GM12878 (cell line): ENCODE measurements at regions of chr14 and their contacts with region 1.

Region 1: DNA sequence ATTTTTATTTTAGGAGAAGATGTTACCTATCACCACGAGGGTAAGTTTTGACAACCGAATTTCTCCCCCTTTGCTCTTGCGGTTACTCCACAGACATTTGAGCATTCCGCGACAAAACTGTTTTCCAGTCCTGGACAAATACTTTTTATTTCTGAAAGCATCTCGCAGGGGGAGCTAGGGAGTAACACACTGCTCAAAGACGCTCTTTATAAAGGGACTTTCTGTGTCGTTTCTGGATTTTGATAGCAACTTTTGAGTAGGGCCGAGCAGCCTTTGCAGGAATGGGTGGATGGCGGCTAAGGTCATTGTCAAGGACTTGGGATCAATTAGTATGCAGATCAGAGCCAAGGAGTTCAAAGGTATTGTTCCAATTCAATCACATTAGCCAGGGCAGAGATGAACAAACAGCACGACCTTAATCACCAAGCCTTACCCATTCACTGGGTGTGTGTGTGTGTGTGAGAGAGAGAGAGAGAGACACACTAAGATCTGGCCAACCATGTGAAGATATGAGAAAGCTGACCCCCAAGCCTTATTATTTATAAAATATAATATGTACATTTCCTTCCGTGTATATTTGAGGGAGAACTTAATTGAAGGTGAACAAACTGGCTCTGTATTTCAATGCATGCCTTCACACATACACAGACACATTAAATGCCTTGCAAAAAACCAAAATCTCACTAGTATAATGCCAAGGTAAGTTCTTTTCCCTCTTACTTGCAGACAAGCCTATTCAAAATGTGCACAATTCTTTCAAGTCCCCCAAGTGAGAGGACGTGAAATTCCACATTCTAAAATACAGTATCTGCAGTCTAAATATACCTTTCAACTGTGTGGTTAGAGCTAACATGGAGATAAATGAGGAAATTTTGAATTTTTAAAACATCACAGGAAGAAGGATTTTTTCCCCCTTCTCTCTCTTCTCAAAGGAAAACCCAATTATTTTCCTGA is 613.8 kb downstream of the VRK1 start:
- DNase-seq: no peak
- ATAC-seq: peak; percentile 37; the same call in 2 of the 3 replicates
- H3K4me3 ChIP-seq: no peak overlapping the region
- H3K27ac ChIP-seq: peak overlapping the region; percentile 53
- H3K4me1 ChIP-seq: peaks cover 13% of the 10 kb centered on the region
- H3K27me3 ChIP-seq: no peaks in the 10 kb centered on the region
- CTCF ChIP-seq: peak in 2 of 3 experiments; percentile 2 to 26; a peak in 1 of 6 replicates
- EP300 ChIP-seq: no peak
- POLR2A ChIP-seq: no peak
- RAD21 ChIP-seq: peak; percentile 43; the same call in 1 of the 2 replicates

Region 2: GRCh38 chr14:97185186-97185585 is 225.8 kb before region 1 on chr14:
- CTCF ChIA-PET with region 1: no interaction called
- POLR2A ChIA-PET with region 1: no interaction called
- RAD21 ChIA-PET with region 1: interaction called, 3 read pairs
- SMC1A ChIA-PET with region 1: interaction called, 4 read pairs
- in situ Hi-C with region 1: no loop called
- intact Hi-C with region 1: loop called (anchors 10 kb)
- DNase-seq: no peak
- ATAC-seq: peak; percentile 45; the same call in 2 of the 3 replicates
- H3K4me3 ChIP-seq: no peak overlapping the region
- H3K27ac ChIP-seq: no peak overlapping the region
- H3K4me1 ChIP-seq: no peaks in the 10 kb centered on the region
- H3K27me3 ChIP-seq: no peaks in the 10 kb centered on the region
- CTCF ChIP-seq: peak; percentile 35 to 48 (median 37); a peak in 4 of 6 replicates
- EP300 ChIP-seq: no peak
- POLR2A ChIP-seq: no peak
- RAD21 ChIP-seq: peak; percentile 73

Region 3: DNA sequence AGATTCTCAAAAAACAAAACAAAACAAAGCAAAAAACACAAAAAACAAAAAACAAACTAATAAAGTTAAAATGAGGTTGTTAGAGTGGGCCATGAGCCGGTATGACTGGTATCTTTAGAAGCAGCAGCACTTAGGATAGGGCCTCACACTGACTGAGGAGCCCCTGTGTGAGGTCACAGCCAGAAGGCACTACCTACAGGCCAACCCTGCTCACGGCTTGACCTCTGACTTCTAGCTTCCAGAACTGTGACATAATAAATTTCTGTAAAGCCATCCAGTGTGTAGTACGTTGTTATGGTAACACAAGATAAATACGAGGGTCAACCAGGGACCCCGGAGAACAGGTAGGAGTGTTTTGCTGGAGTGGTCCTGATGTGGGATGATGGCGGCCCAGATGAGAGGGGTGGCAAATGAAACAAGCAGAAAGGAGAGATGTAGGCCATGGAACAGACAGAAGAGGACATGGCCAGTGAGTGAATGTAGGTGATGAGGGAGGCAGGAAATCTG is 15.9 kb after region 1 on chr14:
- CTCF ChIA-PET with region 1: interaction called, 5 read pairs
- POLR2A ChIA-PET with region 1: interaction called, 5 read pairs
- RAD21 ChIA-PET with region 1: interaction called, 6 read pairs
- SMC1A ChIA-PET with region 1: interaction called, 88 read pairs
- in situ Hi-C with region 1: no loop called
- intact Hi-C with region 1: no loop called
- DNase-seq: no peak
- ATAC-seq: no peak
- H3K4me3 ChIP-seq: no peak overlapping the region
- H3K27ac ChIP-seq: no peak overlapping the region
- H3K4me1 ChIP-seq: no peaks in the 10 kb centered on the region
- H3K27me3 ChIP-seq: no peaks in the 10 kb centered on the region
- CTCF ChIP-seq: no peak
- EP300 ChIP-seq: no peak
- POLR2A ChIP-seq: no peak
- RAD21 ChIP-seq: no peak

Region 4: DNA sequence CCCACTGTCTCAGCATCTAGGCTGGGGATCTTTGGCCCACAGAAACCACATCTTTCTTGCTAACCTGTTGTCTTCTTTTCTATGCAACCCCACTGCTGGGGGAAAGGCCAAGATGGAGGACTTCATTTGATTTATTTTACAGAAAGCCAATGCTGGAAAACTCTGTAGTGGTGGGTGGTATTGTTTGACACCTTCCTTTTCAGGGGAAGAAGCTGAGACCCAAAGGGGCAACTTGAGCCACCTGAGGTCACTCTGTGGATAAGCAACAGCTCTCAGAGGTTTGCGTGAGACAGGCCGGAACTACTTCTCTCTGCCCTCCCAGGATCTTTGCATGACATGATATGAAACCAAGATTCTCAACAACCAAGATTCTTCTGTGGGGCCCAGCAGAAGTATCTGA is 31.4 kb after region 1 on chr14:
- CTCF ChIA-PET with region 1: interaction called, 3 read pairs
- POLR2A ChIA-PET with region 1: interaction called, 3 read pairs
- RAD21 ChIA-PET with region 1: interaction called, 5 read pairs
- SMC1A ChIA-PET with region 1: interaction called, 88 read pairs
- in situ Hi-C with region 1: no loop called
- intact Hi-C with region 1: loop called (anchors 2 kb)
- DNase-seq: peak; percentile 21
- ATAC-seq: peak; percentile 67
- H3K4me3 ChIP-seq: no peak overlapping the region
- H3K27ac ChIP-seq: peak overlapping the region; percentile 38
- H3K4me1 ChIP-seq: no peaks in the 10 kb centered on the region
- H3K27me3 ChIP-seq: no peaks in the 10 kb centered on the region
- CTCF ChIP-seq: no peak
- EP300 ChIP-seq: peak; percentile 65 to 74; a peak in 3 of 4 replicates
- POLR2A ChIP-seq: no peak
- RAD21 ChIP-seq: peak; percentile 27; the same call in 1 of the 2 replicates

Region 5: GRCh38 chr14:97707603-97708002 is 296.7 kb after region 1 on chr14:
- CTCF ChIA-PET with region 1: no interaction called
- POLR2A ChIA-PET with region 1: no interaction called
- RAD21 ChIA-PET with region 1: no interaction called
- SMC1A ChIA-PET with region 1: no interaction called
- in situ Hi-C with region 1: no loop called
- intact Hi-C with region 1: loop called (anchors 10 kb)
- DNase-seq: peak; percentile 40
- ATAC-seq: peak; percentile 77
- H3K4me3 ChIP-seq: no peak overlapping the region
- H3K27ac ChIP-seq: no peak overlapping the region
- H3K4me1 ChIP-seq: peaks cover 7% of the 10 kb centered on the region
- H3K27me3 ChIP-seq: no peaks in the 10 kb centered on the region
- CTCF ChIP-seq: peak; percentile 2 to 17 (median 9); a peak in 1 of 6 replicates
- EP300 ChIP-seq: 0 out of 4 replicates have a peak, but pooled peaks of 1 of the 2 experiments have one; percentile 45
- POLR2A ChIP-seq: no peak
- RAD21 ChIP-seq: peak; percentile 55